Naive thymus-derived CD4-positive, alpha-beta T cell (primary cell): ENCODE measurements at regions of chr11 and their contacts with region 1.

Region 1: GRCh38 chr11:67468835-67469811 is at the start of gene TMEM134:
- DNase-seq: peak; percentile 82 to 95 (median 89)
- ATAC-seq: peak; percentile 92
- H3K4me3 ChIP-seq: peak within 1 kb of the TSS; percentile 74
- H3K4me3 Mint-ChIP-seq: peak within 1 kb of the TSS; percentile 87 to 95 (median 90)
- H3K27ac ChIP-seq: peak within 1 kb of the TSS; percentile 94
- H3K27ac Mint-ChIP-seq: peak within 1 kb of the TSS; percentile 79 to 97 (median 88)
- H3K4me1 ChIP-seq: peaks cover 17 to 37% of the 10 kb centered on the region in 2 donors
- H3K4me1 Mint-ChIP-seq: peaks cover 23 to 42% (median 29%) of the 10 kb centered on the region in 7 donors
- H3K27me3 ChIP-seq: no peaks in the 10 kb centered on the region
- H3K27me3 Mint-ChIP-seq: peaks cover 0 to 6% (median 0%) of the 10 kb centered on the region in 5 donors
- total RNA-seq, gene TMEM134: 52.4 to 94.6 (median 70.6) TPM

Region 2: DNA sequence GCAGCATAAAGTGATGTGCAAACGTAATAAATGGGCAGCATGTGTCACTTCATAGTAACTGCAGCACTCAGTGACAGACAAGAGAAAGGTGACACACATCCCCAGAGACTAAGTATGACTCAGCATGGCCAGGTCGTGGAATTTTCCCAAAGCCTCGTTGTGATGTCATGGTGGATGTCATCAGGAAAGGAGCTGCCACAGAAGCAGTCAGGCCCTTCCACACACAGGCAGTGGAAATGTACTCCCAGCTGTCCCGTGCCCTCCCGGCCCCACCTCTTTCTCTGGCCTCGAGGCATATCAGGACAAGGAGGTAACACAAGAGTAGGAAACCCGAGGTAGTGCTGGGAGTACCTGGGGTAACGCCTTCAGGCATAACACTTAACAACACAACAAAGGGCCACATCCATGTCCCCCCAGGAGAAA is 519.0 kb before region 1 on chr11:
- CTCF ChIA-PET with region 1: no interaction called
- POLR2A ChIA-PET with region 1: no interaction called
- intact Hi-C with region 1: no loop called
- DNase-seq: no peak
- ATAC-seq: no peak
- H3K4me3 ChIP-seq: no peak overlapping the region
- H3K4me3 Mint-ChIP-seq: no peak overlapping the region
- H3K27ac ChIP-seq: no peak overlapping the region
- H3K27ac Mint-ChIP-seq: no peak overlapping the region
- H3K4me1 ChIP-seq: no peaks in the 10 kb centered on the region
- H3K4me1 Mint-ChIP-seq: peaks cover 0 to under 1% (median 0%) of the 10 kb centered on the region in 7 donors
- H3K27me3 ChIP-seq: no peaks in the 10 kb centered on the region
- H3K27me3 Mint-ChIP-seq: no peaks in the 10 kb centered on the region

Region 3: DNA sequence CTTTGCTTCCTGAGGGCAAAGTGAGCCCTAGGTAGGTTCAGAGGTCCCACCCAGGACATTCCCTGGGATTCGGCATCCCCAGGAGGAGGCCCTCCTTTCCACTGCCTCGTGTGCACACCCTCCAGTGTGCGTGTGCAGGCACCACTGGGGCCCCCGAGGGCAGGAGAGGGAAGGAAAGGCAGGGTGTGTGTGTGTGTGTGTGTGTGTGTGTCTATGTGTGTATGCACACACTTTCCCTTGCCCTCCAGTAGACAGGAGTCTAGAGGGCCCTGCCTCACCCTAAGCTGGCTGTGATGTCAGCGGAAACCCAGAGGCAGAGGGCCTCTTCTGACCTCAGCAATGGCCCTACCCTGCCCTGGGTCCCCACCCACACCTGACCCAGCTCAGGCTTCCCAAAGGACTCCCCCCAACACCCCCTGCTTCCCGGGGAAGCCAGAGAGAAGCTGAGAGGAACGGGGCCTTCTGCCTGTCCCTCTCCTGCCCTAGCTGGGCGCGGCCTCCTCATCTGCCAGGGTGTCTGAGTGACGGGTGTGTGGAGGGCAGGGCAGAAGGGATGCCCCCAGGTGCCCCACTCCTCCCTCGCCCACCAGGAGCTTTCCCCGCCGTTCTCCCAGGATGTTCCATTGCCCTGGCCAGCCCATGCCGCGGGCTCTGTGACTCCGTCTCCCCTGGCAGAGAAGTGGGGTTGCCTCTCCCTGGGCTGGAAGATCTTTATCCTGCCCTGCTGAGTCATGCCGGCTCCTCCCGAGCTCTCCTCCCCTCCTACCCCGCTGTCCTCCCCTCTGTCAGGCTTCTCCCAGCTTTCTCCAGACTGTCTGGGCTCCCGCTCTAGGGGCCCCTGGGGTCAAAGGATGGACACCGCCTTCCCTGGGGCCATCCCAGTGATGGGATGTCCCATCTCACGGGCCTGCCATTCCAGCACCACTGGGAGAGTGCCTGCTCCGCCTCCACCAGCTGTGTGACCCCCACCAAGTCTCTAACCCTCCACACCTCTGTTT is 89.8 kb before region 1 on chr11:
- CTCF ChIA-PET with region 1: no interaction called
- POLR2A ChIA-PET with region 1: no interaction called
- intact Hi-C with region 1: no loop called
- DNase-seq: no peak
- ATAC-seq: no peak
- H3K4me3 ChIP-seq: no peak overlapping the region
- H3K4me3 Mint-ChIP-seq: no peak overlapping the region
- H3K27ac ChIP-seq: no peak overlapping the region
- H3K27ac Mint-ChIP-seq: no peak overlapping the region
- H3K4me1 ChIP-seq: peaks cover 4 to 9% of the 10 kb centered on the region in 2 donors
- H3K4me1 Mint-ChIP-seq: peaks cover 6 to 27% (median 17%) of the 10 kb centered on the region in 7 donors
- H3K27me3 ChIP-seq: peaks cover 0 to under 1% of the 10 kb centered on the region in 2 donors
- H3K27me3 Mint-ChIP-seq: peaks cover 0 to 44% (median 4%) of the 10 kb centered on the region in 5 donors

Region 4: DNA sequence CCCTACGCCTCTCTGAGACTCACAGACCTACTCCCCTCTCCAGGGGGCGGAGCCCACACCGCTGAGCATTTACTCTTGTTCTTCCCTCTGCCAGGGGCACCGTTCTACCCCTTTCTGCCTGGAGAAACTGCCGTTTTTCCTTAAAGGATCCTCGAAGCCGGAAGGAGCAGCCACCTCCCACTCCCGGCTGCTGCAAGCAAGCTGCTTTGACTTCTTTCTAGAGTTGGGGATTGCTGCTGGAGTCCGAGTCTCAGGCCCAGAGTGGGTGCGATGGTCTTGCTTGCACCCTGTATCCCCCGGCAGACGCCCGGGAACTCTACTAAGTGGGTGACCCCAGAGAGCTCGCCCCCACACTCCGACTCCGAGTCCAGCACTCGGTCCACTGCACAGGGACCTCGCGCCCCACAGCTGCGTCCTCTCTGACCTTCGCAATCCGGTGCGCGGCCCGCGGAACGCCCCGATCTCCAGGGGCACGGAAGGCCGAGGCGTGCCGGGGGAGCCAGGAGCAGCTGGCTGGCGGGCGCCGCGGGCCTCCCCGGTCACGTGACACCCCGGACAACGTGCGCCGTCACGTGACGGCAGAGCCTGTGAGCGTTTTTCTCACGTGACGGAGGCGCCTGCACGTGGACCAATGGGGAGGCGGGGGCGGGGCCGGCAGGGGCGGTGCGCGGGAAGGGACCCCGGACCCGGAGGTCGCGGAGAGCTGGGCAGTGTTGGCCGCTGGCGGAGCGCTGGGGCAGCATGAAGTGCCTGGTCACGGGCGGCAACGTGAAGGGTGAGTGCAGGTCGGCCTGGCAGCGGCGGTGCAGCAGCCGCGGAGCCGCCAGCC is 77.6 kb before region 1 on chr11 and contains the start of gene RAD9A:
- CTCF ChIA-PET with region 1: interaction called, 3 read pairs
- POLR2A ChIA-PET with region 1: interaction called, 20 read pairs
- intact Hi-C with region 1: loop called (anchors 1 kb)
- DNase-seq: peak; percentile 80 to 94 (median 87)
- ATAC-seq: peak; percentile 90
- H3K4me3 ChIP-seq: peak within 1 kb of the TSS; percentile 49
- H3K4me3 Mint-ChIP-seq: peak within 1 kb of the TSS; percentile 84 to 95 (median 88)
- H3K27ac ChIP-seq: peak within 1 kb of the TSS; percentile 83
- H3K27ac Mint-ChIP-seq: peak within 1 kb of the TSS; percentile 47 to 92 (median 82)
- H3K4me1 ChIP-seq: peaks cover 15 to 16% of the 10 kb centered on the region in 2 donors
- H3K4me1 Mint-ChIP-seq: peaks cover 27 to 47% (median 34%) of the 10 kb centered on the region in 7 donors
- H3K27me3 ChIP-seq: no peaks in the 10 kb centered on the region
- H3K27me3 Mint-ChIP-seq: peaks cover 0 to 3% (median 0%) of the 10 kb centered on the region in 5 donors
- total RNA-seq, gene RAD9A: 25.6 to 48.0 (median 45.0) TPM

Region 5: DNA sequence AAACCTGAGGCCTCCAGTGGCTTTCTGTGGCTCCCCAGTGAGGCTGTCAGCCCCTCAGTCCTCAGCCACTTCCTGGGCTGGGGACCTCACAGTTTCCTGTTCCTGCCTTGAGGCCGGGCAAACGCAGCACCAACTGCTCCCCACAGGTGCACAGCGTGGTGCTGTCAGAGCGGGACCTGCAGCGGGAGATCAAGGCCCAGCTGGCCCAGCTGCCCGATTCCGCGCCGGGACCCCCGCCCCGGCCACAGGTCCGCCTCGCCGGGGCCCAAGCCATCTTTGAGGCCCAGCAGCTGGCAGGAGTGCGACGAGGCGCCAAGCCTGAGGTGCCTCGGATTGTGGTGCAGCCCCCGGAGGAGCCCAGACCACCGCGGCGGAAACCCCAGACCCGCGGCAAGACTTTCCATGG is 59.9 kb before region 1 on chr11:
- CTCF ChIA-PET with region 1: interaction called, 7 read pairs
- POLR2A ChIA-PET with region 1: interaction called, 207 read pairs
- intact Hi-C with region 1: loop called in 1 of 2 experiments (anchors 1 kb)
- DNase-seq: peak in 8 of 9 donors; percentile 62 to 82 (median 78)
- ATAC-seq: peak; percentile 78
- H3K4me3 ChIP-seq: peak overlapping the region; percentile 98
- H3K4me3 Mint-ChIP-seq: peak overlapping the region; percentile 80 to 100 (median 96)
- H3K27ac ChIP-seq: peak overlapping the region; percentile 87
- H3K27ac Mint-ChIP-seq: peak overlapping the region; percentile 83 to 98 (median 93)
- H3K4me1 ChIP-seq: peaks cover 86% of the 10 kb centered on the region in 2 donors
- H3K4me1 Mint-ChIP-seq: peaks cover 52 to 90% (median 78%) of the 10 kb centered on the region in 7 donors
- H3K27me3 ChIP-seq: no peaks in the 10 kb centered on the region
- H3K27me3 Mint-ChIP-seq: peaks cover 0 to 8% (median 0%) of the 10 kb centered on the region in 5 donors

Region 6: DNA sequence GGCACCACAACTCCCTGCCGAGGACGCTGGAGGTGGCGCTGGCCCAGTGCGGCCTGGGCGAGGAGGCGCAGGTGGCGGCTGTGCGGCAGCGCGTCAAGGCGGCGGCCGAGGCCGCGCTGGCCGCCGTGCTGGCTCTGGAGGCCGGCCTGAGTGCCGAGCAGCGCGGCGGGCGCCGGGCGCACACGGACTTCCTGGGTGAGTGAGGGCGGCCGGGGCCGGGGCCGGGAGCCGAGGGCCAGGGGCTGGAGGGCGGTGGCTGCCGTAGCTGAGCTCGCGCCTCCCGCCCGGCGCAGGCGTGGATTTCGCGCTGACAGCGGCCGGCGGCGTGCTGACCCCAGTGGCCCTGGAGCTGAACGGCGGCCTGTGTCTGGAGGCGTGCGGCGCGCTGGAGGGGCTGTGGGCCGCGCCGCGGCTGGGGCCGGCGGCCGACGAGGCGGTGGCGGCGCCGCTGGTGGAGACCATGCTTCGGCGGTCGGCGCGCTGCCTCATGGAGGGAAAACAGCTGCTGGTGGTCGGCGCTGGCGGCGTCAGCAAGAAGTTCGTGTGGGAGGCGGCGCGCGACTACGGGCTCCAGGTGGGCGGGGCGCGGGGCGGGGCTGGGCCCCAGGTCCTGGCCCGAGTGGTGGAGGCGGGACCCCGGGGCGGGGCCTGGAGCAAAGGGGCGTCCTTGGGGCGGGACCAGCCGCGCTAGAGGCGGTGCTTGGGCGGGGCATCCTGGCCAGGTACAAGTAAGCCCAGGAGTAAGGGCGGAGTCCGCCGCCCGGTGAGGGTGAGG is 48.3 kb before region 1 on chr11:
- CTCF ChIA-PET with region 1: interaction called, 7 read pairs
- POLR2A ChIA-PET with region 1: interaction called, 207 read pairs
- intact Hi-C with region 1: loop called in 1 of 2 experiments (anchors 1 kb)
- DNase-seq: peak; percentile 97 to 100 (median 97)
- ATAC-seq: peak; percentile 96
- H3K4me3 ChIP-seq: peak overlapping the region; percentile 56
- H3K4me3 Mint-ChIP-seq: peak overlapping the region; percentile 74 to 92 (median 82)
- H3K27ac ChIP-seq: peak overlapping the region; percentile 77
- H3K27ac Mint-ChIP-seq: peak overlapping the region; percentile 69 to 98 (median 92)
- H3K4me1 ChIP-seq: peaks cover 42 to 49% of the 10 kb centered on the region in 2 donors
- H3K4me1 Mint-ChIP-seq: peaks cover 24 to 60% (median 53%) of the 10 kb centered on the region in 7 donors
- H3K27me3 ChIP-seq: no peaks in the 10 kb centered on the region
- H3K27me3 Mint-ChIP-seq: peaks cover 0 to 15% (median 0%) of the 10 kb centered on the region in 5 donors

Region 7: GRCh38 chr11:67428052-67428914 is 40.8 kb before region 1 on chr11 and contains the start of gene RPS6KB2:
- CTCF ChIA-PET with region 1: interaction called, 3 read pairs
- POLR2A ChIA-PET with region 1: interaction called, 230 read pairs
- intact Hi-C with region 1: loop called (anchors 1 kb)
- DNase-seq: peak; percentile 95 to 100 (median 98)
- ATAC-seq: peak; percentile 97
- H3K4me3 ChIP-seq: peak within 1 kb of the TSS; percentile 82
- H3K4me3 Mint-ChIP-seq: peak within 1 kb of the TSS; percentile 92 to 100 (median 98)
- H3K27ac ChIP-seq: peak within 1 kb of the TSS; percentile 97
- H3K27ac Mint-ChIP-seq: peak within 1 kb of the TSS; percentile 94 to 98 (median 96)
- H3K4me1 ChIP-seq: peaks cover 19 to 38% of the 10 kb centered on the region in 2 donors
- H3K4me1 Mint-ChIP-seq: peaks cover 19 to 62% (median 43%) of the 10 kb centered on the region in 7 donors
- H3K27me3 ChIP-seq: no peaks in the 10 kb centered on the region
- H3K27me3 Mint-ChIP-seq: no peaks in the 10 kb centered on the region
- total RNA-seq, gene RPS6KB2: 61.9 to 83.9 (median 77.7) TPM

Region 8: GRCh38 chr11:67452141-67452952 is 16.8 kb before region 1 on chr11 and contains the start of gene GPR152:
- CTCF ChIA-PET with region 1: interaction called, 3 read pairs
- POLR2A ChIA-PET with region 1: interaction called, 206 read pairs
- intact Hi-C with region 1: loop called in 1 of 2 experiments (anchors 2 kb)
- DNase-seq: no peak
- ATAC-seq: no peak
- H3K4me3 ChIP-seq: no peak within 1 kb of the TSS
- H3K4me3 Mint-ChIP-seq: peak within 1 kb of the TSS in 2 of 10 donors; percentile 27 to 31
- H3K27ac ChIP-seq: no peak within 1 kb of the TSS
- H3K27ac Mint-ChIP-seq: peak within 1 kb of the TSS in 4 of 9 donors; percentile 17 to 68 (median 40)
- H3K4me1 ChIP-seq: peaks cover 9 to 24% of the 10 kb centered on the region in 2 donors
- H3K4me1 Mint-ChIP-seq: peaks cover 15 to 42% (median 23%) of the 10 kb centered on the region in 7 donors
- H3K27me3 ChIP-seq: no peaks in the 10 kb centered on the region
- H3K27me3 Mint-ChIP-seq: no peaks in the 10 kb centered on the region
- total RNA-seq, gene GPR152: not detected